Activated CD4-positive, alpha-beta T cell treated with anti-CD3 and anti-CD28 coated beads, Interleukin-2, amount 10 ng/mL, durations not matched to agents 7 days and 5 days (primary cell): ENCODE measurements at regions of chr4 and their contacts with region 1.

Region 1: GRCh38 chr4:139030614-139031235 is 15.1 kb downstream of the NOCT start:
- DNase-seq: peak; percentile 87
- H3K4me3 Mint-ChIP-seq: no peak overlapping the region
- H3K27ac Mint-ChIP-seq: no peak overlapping the region
- H3K4me1 Mint-ChIP-seq: peaks cover 9% of the 10 kb centered on the region
- H3K27me3 Mint-ChIP-seq: no peaks in the 10 kb centered on the region

Region 2: GRCh38 chr4:139015269-139015947 is 15.3 kb before region 1 on chr4 and contains the start of gene NOCT:
- CTCF ChIA-PET with region 1: interaction called, 18 read pairs
- POLR2A ChIA-PET with region 1: no interaction called
- DNase-seq: peak; percentile 92
- H3K4me3 Mint-ChIP-seq: peak within 1 kb of the TSS; percentile 89
- H3K27ac Mint-ChIP-seq: peak within 1 kb of the TSS; percentile 94
- H3K4me1 Mint-ChIP-seq: peaks cover 40% of the 10 kb centered on the region
- H3K27me3 Mint-ChIP-seq: no peaks in the 10 kb centered on the region
- total RNA-seq, gene NOCT: 5.4 to 6.8 TPM